ENCODE measurements at regions of chr12 and their contacts with region 1.

Region 1: GRCh38 chr12:65602610-65603295 is 221.5 kb upstream of the HMGA2 start:
- DNase-seq: peak; percentile 92
- H3K4me3 ChIP-seq: peak overlapping the region; percentile 36
- H3K27ac ChIP-seq: no peak overlapping the region
- H3K4me1 ChIP-seq: peaks cover 31% of the 10 kb centered on the region
- H3K27me3 ChIP-seq: no peaks in the 10 kb centered on the region
- CTCF ChIP-seq: peak; percentile 90

Region 2: GRCh38 chr12:65685514-65685913 is 82.8 kb after region 1 on chr12:
- CTCF ChIA-PET with region 1: no interaction called
- POLR2A ChIA-PET with region 1: no interaction called
- intact Hi-C with region 1: loop called (anchors 5 kb)
- DNase-seq: peak; percentile 65
- H3K4me3 ChIP-seq: no peak overlapping the region
- H3K27ac ChIP-seq: no peak overlapping the region
- H3K4me1 ChIP-seq: no peaks in the 10 kb centered on the region
- H3K27me3 ChIP-seq: no peaks in the 10 kb centered on the region
- CTCF ChIP-seq: peak; percentile 74

Region 3: GRCh38 chr12:65986047-65986446 is 383.3 kb after region 1 on chr12:
- CTCF ChIA-PET with region 1: no interaction called
- POLR2A ChIA-PET with region 1: no interaction called
- intact Hi-C with region 1: loop called (anchors 5 kb)
- DNase-seq: no peak
- H3K4me3 ChIP-seq: no peak overlapping the region
- H3K27ac ChIP-seq: no peak overlapping the region
- H3K4me1 ChIP-seq: no peaks in the 10 kb centered on the region
- H3K27me3 ChIP-seq: no peaks in the 10 kb centered on the region
- CTCF ChIP-seq: peak; percentile 26; the same call in 1 of the 2 replicates

Region 4: DNA sequence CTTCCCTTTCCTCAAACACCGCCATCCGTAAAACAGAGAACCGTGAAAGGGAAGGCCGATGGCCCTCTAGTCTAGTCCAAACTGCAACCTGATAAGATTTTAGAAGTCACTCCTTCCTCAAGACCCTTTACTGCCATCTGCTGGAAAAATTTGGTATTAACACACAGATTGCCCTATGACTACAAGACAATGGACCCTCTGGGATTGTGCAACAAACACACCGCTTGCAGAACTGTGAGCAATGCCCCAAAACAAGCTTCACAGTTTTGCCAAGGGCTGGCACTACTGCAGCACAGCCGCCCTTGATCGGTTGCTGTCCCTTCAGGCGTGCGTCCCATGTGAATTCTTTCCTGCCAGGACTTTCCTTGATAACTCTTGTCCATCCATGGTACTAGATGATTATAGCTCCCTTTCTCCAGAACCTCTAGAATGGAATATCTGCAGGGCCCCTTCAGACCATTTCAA is 504.7 kb after region 1 on chr12:
- CTCF ChIA-PET with region 1: interaction called, 3 read pairs
- POLR2A ChIA-PET with region 1: no interaction called
- intact Hi-C with region 1: loop called (anchors 5 kb)
- DNase-seq: peak; percentile 98
- H3K4me3 ChIP-seq: peak overlapping the region; percentile 11
- H3K27ac ChIP-seq: peak overlapping the region; percentile 86
- H3K4me1 ChIP-seq: peaks cover 75% of the 10 kb centered on the region
- H3K27me3 ChIP-seq: no peaks in the 10 kb centered on the region
- CTCF ChIP-seq: peak; percentile 82

Measured in A673 (cell line).